ENCODE measurements at regions of chr7 and their contacts with region 1.

Region 1: DNA sequence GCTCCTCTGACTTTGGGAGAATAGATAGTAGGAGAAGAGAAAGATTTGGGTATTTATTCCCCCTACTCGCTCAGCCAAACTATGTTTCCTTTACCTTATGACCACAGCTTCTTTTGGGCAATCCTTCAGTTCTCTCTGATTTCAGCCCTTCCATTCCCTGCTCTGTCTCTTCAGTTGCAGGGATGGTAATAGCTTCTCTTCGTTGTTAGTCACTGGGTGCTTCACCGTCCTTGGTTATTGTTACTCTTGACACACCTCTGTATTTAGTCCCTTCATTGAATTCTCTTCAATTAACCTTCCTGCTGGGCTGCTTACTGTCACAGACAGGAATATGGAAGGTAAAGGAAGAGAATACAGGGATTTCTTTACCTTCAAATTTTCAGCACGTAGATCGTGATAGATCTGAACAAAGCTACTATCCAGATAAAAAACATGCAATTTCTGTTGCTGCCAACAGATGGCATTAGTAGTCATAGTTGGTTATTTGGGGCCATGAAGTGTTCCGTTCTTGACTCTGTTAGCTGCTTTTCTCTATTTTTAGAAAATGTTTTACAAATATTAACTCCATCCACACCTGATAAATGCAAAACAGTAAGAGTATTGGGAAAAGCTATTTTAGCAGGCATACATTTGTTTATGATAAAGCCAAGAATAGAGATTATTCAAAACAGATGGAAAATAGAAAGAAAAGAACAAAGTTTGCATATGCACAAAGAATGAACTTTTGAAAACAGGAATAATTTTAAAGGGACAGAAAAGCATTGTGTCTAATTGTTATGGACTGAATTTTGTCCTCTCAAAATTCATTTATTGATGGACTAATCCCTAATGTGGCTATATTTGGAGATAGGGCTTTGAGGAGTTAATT is 14.0 kb upstream of the PTTG1IP2 start:
- DNase-seq: no peak
- ATAC-seq: peak; percentile 63

Region 2: GRCh38 chr7:90119178-90119971 is 336.0 kb before region 1 on chr7:
- intact Hi-C with region 1: no loop called
- DNase-seq: peak in 1 of 2 donors; percentile 6
- ATAC-seq: peak; percentile 21

Region 3: DNA sequence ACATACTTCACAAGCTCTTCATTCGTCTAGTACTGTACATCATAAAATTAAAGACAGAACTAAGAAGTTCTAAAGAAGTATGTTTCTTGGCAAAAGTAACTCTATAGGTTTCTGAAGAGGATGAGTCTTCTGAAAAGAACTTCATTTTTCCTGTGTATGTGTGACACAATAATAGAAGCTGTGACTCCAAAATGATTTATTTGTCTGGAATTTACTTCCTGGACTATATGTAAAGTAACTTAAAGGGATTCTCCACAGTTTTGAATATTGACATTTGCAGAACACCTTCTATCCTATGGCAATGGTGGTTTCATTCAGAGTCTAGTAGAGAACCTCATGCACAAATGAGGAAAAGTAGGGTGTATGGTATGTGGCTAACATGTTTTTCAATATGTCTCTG is 72.0 kb before region 1 on chr7:
- intact Hi-C with region 1: no loop called
- DNase-seq: no peak
- ATAC-seq: no peak

Region 4: GRCh38 chr7:90629297-90629918 is 174.0 kb after region 1 on chr7:
- intact Hi-C with region 1: loop called in 1 of 2 experiments (anchors 10 kb)
- DNase-seq: no peak
- ATAC-seq: no peak

Region 5: DNA sequence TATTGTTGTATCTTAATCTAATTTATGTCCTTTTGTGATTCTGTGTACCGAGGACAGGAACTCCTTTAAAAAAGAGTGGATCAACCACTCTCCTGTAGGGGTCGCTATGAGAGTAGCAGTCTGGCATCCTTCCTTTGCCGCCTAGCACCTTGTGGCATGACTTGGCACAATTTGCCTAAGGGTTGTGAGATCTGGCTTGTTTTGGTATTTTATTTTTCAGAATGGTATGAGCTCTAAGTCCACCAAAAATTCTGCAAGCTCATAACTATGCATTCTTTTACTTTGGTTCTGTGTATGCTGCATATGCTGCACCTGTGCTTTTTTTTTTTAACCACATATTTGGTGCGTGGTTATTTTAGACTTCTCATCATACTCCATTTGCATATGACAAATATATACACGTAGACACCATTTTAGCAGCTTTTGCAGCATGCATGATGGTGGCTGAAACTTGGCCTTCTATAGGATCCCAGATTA is 253.5 kb after region 1 on chr7:
- intact Hi-C with region 1: no loop called
- DNase-seq: peak; percentile 30 to 34
- ATAC-seq: peak; percentile 70

Region 6: DNA sequence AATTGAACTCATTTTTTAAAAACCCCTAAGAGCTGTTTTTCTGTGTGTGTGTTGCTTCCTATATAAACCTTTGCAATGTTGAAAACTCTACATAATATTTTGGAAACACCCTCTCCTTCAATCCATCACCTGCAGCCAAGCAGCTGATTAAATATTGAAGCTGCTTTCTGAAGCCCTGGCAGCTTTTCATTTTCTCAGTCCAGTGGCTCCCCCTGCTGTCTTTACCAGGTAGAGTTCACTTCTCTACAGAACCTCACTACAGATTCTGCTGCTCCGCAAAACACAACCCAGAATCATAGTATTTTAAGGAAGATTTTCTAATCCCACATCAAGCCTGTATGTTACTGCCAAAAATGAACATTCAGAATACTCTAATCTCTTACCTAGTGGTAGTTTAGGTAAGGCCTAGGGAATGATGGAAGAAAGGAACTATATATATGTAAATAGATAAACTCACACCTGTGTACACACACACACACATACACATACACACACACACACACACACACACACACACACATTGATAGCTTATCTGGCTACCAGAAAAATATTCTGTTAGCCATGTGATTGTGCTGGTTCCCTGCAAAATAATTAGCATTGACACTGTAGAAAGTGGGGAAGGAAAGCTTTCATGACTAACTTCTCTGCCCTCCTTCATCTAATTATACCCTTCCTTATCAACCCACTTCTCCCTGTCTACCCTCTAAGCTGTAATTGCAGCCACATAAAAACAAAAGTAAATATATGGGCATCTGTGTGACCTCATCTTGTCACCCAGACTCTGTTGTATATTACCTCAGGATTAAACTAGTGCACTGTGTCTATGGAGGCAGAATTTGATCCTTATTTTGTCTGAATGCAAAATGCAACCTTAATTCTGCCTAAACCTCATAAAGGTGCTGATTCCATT is 579.3 kb after region 1 on chr7:
- intact Hi-C with region 1: loop called in 1 of 2 experiments (anchors 10 kb)
- DNase-seq: peak in 1 of 2 donors; percentile 55
- ATAC-seq: peak; percentile 76